ENCODE measurements at regions of chr1 and their contacts with region 1.

Region 1: GRCh38 chr1:29124366-29125236 is 898 bp upstream of the TMEM200B start:
- DNase-seq: peak; percentile 87 to 95 (median 94)
- ATAC-seq: peak; percentile 79 to 81
- H3K4me3 ChIP-seq: peak overlapping the region; percentile 70
- H3K27ac ChIP-seq: peak overlapping the region; percentile 86
- H3K4me1 ChIP-seq: no peaks in the 10 kb centered on the region
- H3K27me3 ChIP-seq: no peaks in the 10 kb centered on the region

Region 2: DNA sequence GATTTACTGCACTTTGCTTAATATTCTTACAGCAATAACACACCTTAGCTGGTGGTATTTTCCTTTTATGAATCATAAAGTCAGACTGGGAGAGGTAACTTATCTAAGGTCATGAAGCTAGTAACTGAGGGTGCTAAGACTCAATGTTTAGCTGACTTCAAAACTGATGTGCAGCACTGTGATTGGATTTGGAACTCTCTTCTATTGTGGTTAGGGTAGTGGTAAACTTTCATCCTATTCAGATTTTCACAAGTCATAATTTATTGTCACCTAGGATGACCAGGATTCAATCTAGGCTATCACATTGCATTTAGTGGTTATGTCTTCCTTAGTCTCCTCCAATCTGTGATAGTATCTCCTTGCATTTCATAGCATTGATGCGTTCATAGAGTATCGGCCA is 191.3 kb before region 1 on chr1:
- intact Hi-C with region 1: no loop called
- DNase-seq: no peak
- ATAC-seq: no peak
- H3K4me3 ChIP-seq: no peak overlapping the region
- H3K27ac ChIP-seq: no peak overlapping the region
- H3K4me1 ChIP-seq: peaks cover 2% of the 10 kb centered on the region
- H3K27me3 ChIP-seq: no peaks in the 10 kb centered on the region

Region 3: DNA sequence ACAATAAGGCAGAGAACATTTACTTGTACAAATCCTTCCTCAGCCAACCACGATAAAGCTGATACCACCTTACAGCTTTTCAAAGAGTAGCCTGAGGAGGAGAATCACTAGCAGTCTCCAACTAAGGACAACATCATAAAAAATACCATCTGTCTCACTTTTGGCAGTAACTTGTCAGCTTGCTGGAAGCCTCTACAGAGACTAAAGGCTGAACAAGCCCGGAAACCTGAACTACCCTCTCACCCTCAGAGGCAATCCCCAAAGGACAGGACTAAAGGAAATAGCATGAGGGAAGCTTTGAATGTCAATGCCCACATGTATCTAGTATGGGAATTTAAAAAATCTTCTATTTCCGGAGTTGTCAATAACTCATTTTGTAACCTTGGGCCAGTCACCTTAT is 46.5 kb after region 1 on chr1:
- intact Hi-C with region 1: loop called in 1 of 4 experiments (anchors 10 kb)
- DNase-seq: no peak
- ATAC-seq: no peak
- H3K4me3 ChIP-seq: no peak overlapping the region
- H3K27ac ChIP-seq: no peak overlapping the region
- H3K4me1 ChIP-seq: peaks cover 10% of the 10 kb centered on the region
- H3K27me3 ChIP-seq: no peaks in the 10 kb centered on the region

Region 4: DNA sequence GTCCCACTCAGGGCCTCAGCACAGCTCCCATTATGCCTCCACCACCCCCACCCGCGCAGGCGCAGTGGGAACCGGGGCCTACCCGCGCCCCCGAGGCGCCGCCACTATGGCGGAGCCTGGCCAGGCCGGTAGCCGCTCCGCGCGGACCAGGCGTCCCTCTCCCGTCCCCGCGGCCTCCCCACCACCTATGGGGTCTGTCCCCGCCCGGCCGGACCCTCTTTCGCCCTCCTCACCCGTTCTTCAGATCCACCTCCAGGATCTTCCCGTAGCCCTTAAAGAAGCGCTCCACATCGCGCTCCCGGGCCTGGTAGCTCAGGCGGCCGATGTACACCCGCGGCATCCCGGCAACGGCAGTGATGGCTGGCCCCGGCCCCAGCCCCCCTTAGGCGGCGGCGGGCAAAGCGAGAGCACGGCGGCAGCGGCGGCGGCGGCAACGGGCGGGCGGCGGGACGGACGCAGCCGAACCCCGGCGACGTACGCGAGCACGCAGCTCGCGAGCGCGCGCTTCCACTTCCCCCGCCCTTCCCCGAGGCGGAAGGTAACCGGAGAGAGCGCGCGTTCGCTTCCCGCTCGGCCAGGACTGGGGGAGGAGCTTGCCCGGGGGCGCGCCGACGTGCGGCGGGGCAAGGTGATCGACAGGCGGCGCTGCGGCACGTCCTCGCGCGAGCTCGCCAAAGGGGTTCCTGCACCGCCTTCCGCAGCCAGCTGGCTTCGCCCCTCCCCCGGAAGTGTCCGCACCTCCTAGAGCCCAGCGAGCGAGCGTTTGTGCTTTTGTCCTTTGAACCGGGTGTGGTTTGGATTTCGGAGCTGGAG is 57.0 kb after region 1 on chr1 and contains the start of gene SRSF4:
- intact Hi-C with region 1: loop called in 3 of 4 experiments (anchors 5 to 10 kb)
- DNase-seq: peak; percentile 100
- ATAC-seq: peak; percentile 95 to 97
- H3K4me3 ChIP-seq: peak within 1 kb of the TSS; percentile 80
- H3K27ac ChIP-seq: peak within 1 kb of the TSS; percentile 100
- H3K4me1 ChIP-seq: peaks cover 3% of the 10 kb centered on the region
- H3K27me3 ChIP-seq: no peaks in the 10 kb centered on the region
- total RNA-seq, gene SRSF4: 52.0 to 63.7 (median 61.1) TPM